ENCODE measurements at regions of chr1 and their contacts with region 1.

Region 1: GRCh38 chr1:61035880-61036279 is 46.5 kb upstream of the NFIA start:
- DNase-seq: no peak
- ATAC-seq: no peak
- H3K4me3 ChIP-seq: no peak overlapping the region
- H3K27ac ChIP-seq: no peak overlapping the region
- H3K4me1 ChIP-seq: no peaks in the 10 kb centered on the region
- H3K27me3 ChIP-seq: no peaks in the 10 kb centered on the region

Region 2: DNA sequence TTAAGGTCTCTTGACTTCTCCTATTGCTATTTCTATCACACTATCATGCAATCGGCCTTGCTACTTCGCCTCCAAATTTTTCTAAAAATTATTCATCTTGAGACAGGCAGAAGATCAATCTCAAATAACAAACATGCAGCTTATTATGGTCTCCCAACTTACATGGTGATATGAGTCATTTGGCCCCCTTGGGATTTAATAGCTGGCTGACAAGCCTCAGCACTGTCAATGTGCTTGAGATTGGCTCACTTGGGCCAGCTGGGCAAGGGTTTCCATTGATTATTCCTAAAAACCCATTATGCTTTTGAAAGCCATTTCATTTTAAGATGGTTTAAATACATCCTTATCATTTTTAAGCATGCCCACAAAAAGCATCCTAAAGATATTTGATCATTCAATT is 178.0 kb before region 1 on chr1:
- intact Hi-C with region 1: loop called in 1 of 2 experiments (anchors 10 kb)
- DNase-seq: no peak
- ATAC-seq: no peak
- H3K4me3 ChIP-seq: no peak overlapping the region
- H3K27ac ChIP-seq: no peak overlapping the region
- H3K4me1 ChIP-seq: no peaks in the 10 kb centered on the region
- H3K27me3 ChIP-seq: no peaks in the 10 kb centered on the region

Region 3: DNA sequence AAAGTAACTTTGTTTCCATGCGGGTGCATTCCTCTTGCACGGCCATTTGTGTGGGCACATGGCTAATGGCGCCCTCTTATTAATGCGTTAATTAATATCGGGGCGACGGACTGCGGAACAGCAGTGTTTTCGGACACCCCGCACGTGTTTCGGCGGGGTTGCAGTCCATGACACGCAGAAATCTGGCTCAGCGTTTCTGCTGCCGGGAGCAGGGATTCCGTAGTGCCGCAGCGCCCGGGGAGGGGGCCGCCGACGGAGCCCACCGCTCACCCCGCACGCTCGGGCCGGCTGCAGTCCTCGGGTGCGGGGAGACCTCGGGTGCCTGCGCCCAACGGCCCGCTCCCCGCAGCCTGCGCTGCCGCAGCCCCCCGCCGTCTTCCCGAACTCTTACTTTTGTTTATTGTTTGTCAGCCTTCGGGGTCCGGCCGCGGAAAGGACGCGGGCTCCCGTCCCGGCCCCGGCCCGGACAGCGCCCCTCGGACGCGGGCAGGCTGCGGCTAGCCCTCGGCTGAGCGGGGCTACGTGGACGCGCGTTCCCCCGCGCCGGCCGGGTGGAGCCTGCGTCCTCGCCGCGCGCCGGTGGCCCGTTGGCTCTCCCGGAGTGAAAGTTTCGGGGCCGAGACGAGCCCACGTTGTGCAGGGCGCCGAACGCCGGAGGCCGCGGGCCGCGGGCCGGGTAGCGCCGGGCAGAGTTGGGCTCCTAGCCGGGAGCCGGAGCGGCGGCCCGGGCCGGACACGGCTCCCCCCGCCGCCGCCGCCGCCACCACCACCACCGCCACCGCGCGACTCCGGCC is 47.3 kb after region 1 on chr1:
- intact Hi-C with region 1: no loop called
- DNase-seq: peak in 1 of 2 donors; percentile 79
- ATAC-seq: peak; percentile 45
- H3K4me3 ChIP-seq: peak overlapping the region; percentile 97
- H3K27ac ChIP-seq: peak overlapping the region; percentile 92 to 99
- H3K4me1 ChIP-seq: no peaks in the 10 kb centered on the region
- H3K27me3 ChIP-seq: no peaks in the 10 kb centered on the region

Measured in aorta (tissue), 5 donors.